Activated CD4-positive, alpha-beta memory T cell treated with anti-CD3 and anti-CD28 coated beads for 36 hours (primary cell): ENCODE measurements at regions of chr20 and their contacts with region 1.

Region 1: GRCh38 chr20:51121901-51122441 is 99.1 kb upstream of the KCNG1 start:
- DNase-seq: no peak
- H3K4me3 Mint-ChIP-seq: no peak overlapping the region
- H3K27ac Mint-ChIP-seq: no peak overlapping the region
- H3K4me1 Mint-ChIP-seq: peaks cover 19% of the 10 kb centered on the region
- H3K27me3 Mint-ChIP-seq: peaks cover 23% of the 10 kb centered on the region

Region 2: DNA sequence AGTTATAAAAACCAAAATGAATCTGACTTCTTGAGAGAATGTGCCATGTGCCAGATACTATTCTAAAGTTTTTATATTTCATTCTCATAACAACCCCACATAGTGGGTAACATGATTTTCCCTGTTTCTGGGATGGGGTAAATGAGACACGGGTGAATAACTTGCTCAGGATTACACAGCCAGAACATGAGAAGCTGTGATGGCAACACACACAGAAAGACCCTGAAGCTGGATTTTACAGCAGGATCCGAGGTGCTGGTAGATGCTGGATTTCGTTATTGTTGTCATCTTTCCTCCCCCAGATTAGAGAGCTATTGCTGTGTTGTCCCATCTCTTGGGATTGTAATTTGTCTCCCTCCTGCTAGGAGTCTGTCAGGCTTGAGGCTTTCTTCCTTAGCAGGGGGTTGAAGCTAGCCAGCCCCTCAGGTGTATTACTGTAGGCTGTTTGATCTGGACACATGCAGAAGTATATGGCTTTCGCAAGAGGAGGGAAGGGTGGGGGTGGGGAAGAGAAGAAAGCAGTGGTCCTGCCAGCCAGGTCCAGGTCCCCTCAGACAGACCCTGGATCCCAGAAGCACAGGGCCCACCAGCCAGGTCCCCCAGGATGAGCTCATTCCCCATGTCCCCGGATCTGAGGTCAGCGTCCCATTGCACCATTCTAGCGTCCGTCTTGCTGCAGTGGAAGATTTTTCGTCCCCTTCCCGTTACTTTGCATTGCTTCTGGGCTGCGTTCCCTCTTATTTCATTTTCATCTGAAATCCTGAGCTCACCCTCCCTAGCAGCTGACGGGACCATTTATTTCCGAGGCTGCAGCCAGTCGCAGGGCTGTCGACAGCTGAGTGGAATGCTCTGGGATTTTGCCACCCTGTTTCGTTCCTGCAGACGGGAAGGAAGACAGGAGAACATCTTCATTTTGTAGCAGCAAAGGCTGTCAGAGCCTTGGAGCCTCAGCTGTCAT is 91.7 kb before region 1 on chr20:
- CTCF ChIA-PET with region 1: no interaction called
- POLR2A ChIA-PET with region 1: no interaction called
- intact Hi-C with region 1: no loop called
- DNase-seq: no peak
- H3K4me3 Mint-ChIP-seq: no peak overlapping the region
- H3K27ac Mint-ChIP-seq: no peak overlapping the region
- H3K4me1 Mint-ChIP-seq: no peaks in the 10 kb centered on the region
- H3K27me3 Mint-ChIP-seq: peaks cover 68% of the 10 kb centered on the region

Region 3: GRCh38 chr20:51059862-51060261 is 62.1 kb before region 1 on chr20:
- CTCF ChIA-PET with region 1: no interaction called
- POLR2A ChIA-PET with region 1: no interaction called
- intact Hi-C with region 1: loop called (anchors 1 kb)
- DNase-seq: peak; percentile 17
- H3K4me3 Mint-ChIP-seq: no peak overlapping the region
- H3K27ac Mint-ChIP-seq: no peak overlapping the region
- H3K4me1 Mint-ChIP-seq: peaks cover 48% of the 10 kb centered on the region
- H3K27me3 Mint-ChIP-seq: peaks cover 27% of the 10 kb centered on the region

Region 4: GRCh38 chr20:51220293-51220706 is 98.3 kb after region 1 on chr20:
- CTCF ChIA-PET with region 1: no interaction called
- POLR2A ChIA-PET with region 1: no interaction called
- intact Hi-C with region 1: no loop called
- DNase-seq: peak; percentile 74
- H3K4me3 Mint-ChIP-seq: no peak overlapping the region
- H3K27ac Mint-ChIP-seq: no peak overlapping the region
- H3K4me1 Mint-ChIP-seq: peaks cover 12% of the 10 kb centered on the region
- H3K27me3 Mint-ChIP-seq: peaks cover 44% of the 10 kb centered on the region

Region 5: GRCh38 chr20:51661609-51662178 is 539.7 kb after region 1 on chr20:
- CTCF ChIA-PET with region 1: no interaction called
- POLR2A ChIA-PET with region 1: no interaction called
- intact Hi-C with region 1: loop called (anchors 2 kb)
- DNase-seq: peak; percentile 65
- H3K4me3 Mint-ChIP-seq: no peak overlapping the region
- H3K27ac Mint-ChIP-seq: peak overlapping the region; percentile 29
- H3K4me1 Mint-ChIP-seq: peaks cover 22% of the 10 kb centered on the region
- H3K27me3 Mint-ChIP-seq: peaks cover 10% of the 10 kb centered on the region